Naive thymus-derived CD4-positive, alpha-beta T cell (primary cell): ENCODE measurements at regions of chr22 and their contacts with region 1.

Region 1: DNA sequence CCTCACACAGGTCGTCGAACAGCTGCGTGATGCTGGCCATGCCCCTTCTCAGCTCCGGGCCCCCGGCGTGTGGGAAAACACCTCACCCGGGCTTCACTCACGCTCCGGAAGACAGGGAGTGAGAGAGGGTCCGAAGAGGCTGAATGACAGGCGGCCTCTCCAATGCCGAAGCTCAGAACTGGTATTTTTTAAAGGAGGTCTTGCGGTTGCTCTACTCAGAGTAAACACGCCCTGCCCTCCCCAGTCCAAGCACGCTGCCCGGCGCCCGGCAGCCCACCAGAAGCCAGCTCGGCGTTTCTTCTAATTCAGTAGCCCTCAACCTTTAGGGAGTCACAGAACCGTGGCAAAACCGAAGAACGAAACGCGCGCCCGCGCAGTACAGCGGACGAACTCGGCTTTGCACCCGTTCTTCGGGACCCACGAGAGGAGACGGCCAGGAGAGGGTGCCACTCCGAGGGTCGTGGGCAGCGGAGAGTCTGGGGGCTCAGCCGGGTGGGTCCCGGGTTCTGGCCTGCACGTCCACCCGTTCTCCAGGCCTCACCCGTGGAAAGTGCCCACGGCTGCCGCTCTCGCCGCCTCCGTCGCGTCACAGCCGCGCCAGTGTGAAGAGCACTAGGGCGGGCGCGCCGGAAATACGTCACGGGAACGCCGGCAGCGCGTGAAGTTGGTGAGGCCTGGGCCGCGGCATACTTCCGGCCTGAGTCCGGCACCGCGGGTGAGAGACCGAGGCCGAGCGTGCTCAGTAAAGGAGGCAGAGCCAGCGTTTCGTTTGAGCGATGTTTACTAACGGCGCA is at the start of gene TUBGCP6:
- DNase-seq: peak; percentile 88 to 95 (median 93)
- ATAC-seq: peak; percentile 88
- H3K4me3 ChIP-seq: peak within 1 kb of the TSS; percentile 73
- H3K4me3 Mint-ChIP-seq: peak within 1 kb of the TSS; percentile 76 to 100 (median 98)
- H3K27ac ChIP-seq: peak within 1 kb of the TSS; percentile 96
- H3K27ac Mint-ChIP-seq: peak within 1 kb of the TSS; percentile 91 to 100 (median 100)
- H3K4me1 ChIP-seq: peaks cover 39 to 51% of the 10 kb centered on the region in 2 donors
- H3K4me1 Mint-ChIP-seq: peaks cover 16 to 52% (median 40%) of the 10 kb centered on the region in 7 donors
- H3K27me3 ChIP-seq: no peaks in the 10 kb centered on the region
- H3K27me3 Mint-ChIP-seq: no peaks in the 10 kb centered on the region
- total RNA-seq, gene TUBGCP6: 67.8 to 146 (median 134) TPM

Region 2: GRCh38 chr22:50200461-50201190 is 44.0 kb before region 1 on chr22 and contains the start of gene SELENOO:
- CTCF ChIA-PET with region 1: no interaction called
- POLR2A ChIA-PET with region 1: interaction called, 3 read pairs
- intact Hi-C with region 1: loop called in 1 of 2 experiments (anchors 1 kb)
- DNase-seq: peak; percentile 76 to 93 (median 83)
- ATAC-seq: peak; percentile 94
- H3K4me3 ChIP-seq: peak within 1 kb of the TSS; percentile 48
- H3K4me3 Mint-ChIP-seq: peak within 1 kb of the TSS; percentile 74 to 90 (median 82)
- H3K27ac ChIP-seq: peak within 1 kb of the TSS; percentile 93
- H3K27ac Mint-ChIP-seq: peak within 1 kb of the TSS in 7 of 9 donors; percentile 51 to 85 (median 76)
- H3K4me1 ChIP-seq: peaks cover 4 to 15% of the 10 kb centered on the region in 2 donors
- H3K4me1 Mint-ChIP-seq: peaks cover 19 to 33% (median 27%) of the 10 kb centered on the region in 7 donors
- H3K27me3 ChIP-seq: no peaks in the 10 kb centered on the region
- H3K27me3 Mint-ChIP-seq: no peaks in the 10 kb centered on the region
- total RNA-seq, gene SELENOO: 26.7 to 36.6 (median 32.4) TPM

Region 3: DNA sequence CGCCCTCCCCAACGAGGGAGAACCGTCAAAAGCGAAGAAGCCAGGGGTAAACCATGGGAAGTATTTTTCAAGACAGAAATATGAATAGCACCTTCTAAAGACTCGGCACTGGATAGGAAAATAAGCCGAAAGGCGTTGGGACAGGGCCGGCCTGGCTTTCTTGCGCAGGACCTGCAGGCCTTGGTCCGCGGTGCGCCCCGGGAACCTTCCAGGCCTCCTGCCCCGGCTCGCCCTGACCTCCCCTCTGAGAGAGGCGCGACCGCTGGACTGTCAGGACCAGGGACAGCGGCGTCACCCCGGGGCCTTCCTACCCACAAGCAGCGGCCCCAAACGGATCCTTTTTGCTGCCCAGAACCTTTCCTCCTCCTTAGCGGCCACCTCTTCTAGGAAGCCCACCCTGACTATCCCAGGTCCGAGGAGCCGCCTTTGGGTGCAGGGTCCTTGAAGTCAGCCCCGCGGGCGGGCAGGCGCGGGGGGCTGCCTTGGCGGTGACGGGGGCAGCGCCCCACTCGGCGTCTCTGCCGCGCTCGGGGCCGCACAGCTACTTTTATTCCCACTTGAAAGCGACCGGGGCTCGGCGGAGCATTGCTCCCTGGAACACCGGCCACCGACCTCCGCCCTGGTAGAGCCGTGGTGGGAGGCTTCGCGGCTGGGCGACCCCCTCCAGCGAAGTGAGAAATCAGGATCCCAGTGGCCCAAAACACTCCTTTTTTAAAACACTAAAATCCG is 26.2 kb after region 1 on chr22:
- CTCF ChIA-PET with region 1: interaction called, 3 read pairs
- POLR2A ChIA-PET with region 1: interaction called, 3 read pairs
- intact Hi-C with region 1: loop called in 1 of 2 experiments (anchors 1 kb)
- DNase-seq: peak; percentile 44 to 80 (median 67)
- ATAC-seq: peak; percentile 72
- H3K4me3 ChIP-seq: peak overlapping the region; percentile 68
- H3K4me3 Mint-ChIP-seq: peak overlapping the region; percentile 56 to 82 (median 74)
- H3K27ac ChIP-seq: peak overlapping the region; percentile 23
- H3K27ac Mint-ChIP-seq: peak overlapping the region in 2 of 9 donors; percentile 33 to 48
- H3K4me1 ChIP-seq: peaks cover 3 to 18% of the 10 kb centered on the region in 2 donors
- H3K4me1 Mint-ChIP-seq: peaks cover 5 to 20% (median 13%) of the 10 kb centered on the region in 7 donors
- H3K27me3 ChIP-seq: no peaks in the 10 kb centered on the region
- H3K27me3 Mint-ChIP-seq: peaks cover 0 to 16% (median 0%) of the 10 kb centered on the region in 5 donors

Region 4: DNA sequence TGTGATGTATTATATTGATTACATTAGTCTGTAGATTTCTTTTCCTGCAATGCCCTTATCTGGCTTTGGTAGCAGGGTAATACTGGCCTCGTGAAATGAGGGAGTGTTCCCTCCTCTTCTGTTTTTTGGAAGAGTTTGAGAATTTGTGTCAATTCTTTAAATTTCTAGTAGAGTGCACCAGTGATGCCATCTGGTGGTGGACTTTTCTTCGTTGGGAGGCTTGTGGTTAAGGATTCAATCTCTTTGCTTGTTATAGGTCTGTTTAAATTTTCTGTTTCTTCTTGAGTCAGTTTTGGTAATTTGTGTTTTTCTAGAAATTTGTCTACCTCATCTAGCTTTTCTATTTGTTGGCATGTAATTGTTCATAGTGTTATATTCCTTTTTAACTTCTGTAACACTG is 446.9 kb after region 1 on chr22:
- CTCF ChIA-PET with region 1: no interaction called
- POLR2A ChIA-PET with region 1: no interaction called
- intact Hi-C with region 1: loop called in 1 of 2 experiments (anchors 1 kb)
- DNase-seq: peak in 6 of 9 donors; percentile 16 to 45 (median 34)
- ATAC-seq: no peak
- H3K4me3 ChIP-seq: no peak overlapping the region
- H3K4me3 Mint-ChIP-seq: no peak overlapping the region
- H3K27ac ChIP-seq: no peak overlapping the region
- H3K27ac Mint-ChIP-seq: no peak overlapping the region
- H3K4me1 ChIP-seq: no peaks in the 10 kb centered on the region
- H3K4me1 Mint-ChIP-seq: peaks cover 0 to 7% (median 0%) of the 10 kb centered on the region in 7 donors
- H3K27me3 ChIP-seq: no peaks in the 10 kb centered on the region
- H3K27me3 Mint-ChIP-seq: peaks cover 0 to 23% (median 0%) of the 10 kb centered on the region in 5 donors